IMR-90 (cell line): ENCODE measurements at regions of chr7 and their contacts with region 1.

Region 1: GRCh38 chr7:141654551-141654950 is 47.4 kb downstream of the DENND11 start:
- DNase-seq: peak; percentile 69
- ATAC-seq: peak; percentile 81
- H3K4me3 ChIP-seq: no peak overlapping the region
- H3K27ac ChIP-seq: no peak overlapping the region
- H3K4me1 ChIP-seq: no peaks in the 10 kb centered on the region
- H3K27me3 ChIP-seq: no peaks in the 10 kb centered on the region
- CTCF ChIP-seq: peak; percentile 78
- POLR2A ChIP-seq: no peak
- RAD21 ChIP-seq: peak; percentile 70

Region 2: DNA sequence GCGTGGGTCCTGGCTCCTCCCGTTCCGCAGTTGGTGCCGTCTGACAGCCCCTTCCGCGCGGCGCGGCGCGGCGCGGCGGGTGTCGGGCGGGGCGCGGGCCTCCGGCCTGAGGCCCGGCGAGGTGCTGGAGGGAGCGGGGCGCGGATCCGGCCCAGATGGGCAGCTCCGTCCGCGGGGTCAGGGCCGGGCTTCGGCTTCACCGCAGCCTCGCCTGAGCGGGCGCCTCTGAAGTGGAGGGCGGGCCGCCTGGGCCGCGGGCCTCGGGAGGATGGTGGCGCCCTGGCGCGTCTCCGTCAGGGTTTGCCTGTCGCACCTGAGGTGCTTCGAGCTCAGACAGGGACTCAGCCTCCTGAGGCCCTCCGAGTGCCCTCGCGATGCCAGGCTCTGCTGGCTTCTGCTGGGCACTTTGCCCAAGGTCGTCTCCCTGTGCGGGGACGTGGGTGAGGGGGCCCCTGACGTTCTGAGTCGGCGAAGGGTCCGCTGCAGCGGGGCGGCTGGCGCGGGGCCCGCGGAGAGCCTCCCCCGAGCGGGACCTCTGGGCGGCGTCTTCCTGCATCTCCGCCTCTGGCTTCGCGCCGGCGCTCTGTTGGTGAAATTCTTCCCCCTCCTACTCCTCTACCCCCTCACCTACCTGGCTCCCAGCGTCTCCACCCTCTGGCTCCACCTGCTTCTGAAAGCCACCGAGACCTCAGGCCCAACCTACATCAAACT is 981.3 kb before region 1 on chr7:
- CTCF ChIA-PET with region 1: no interaction called
- POLR2A ChIA-PET with region 1: no interaction called
- dilution Hi-C with region 1: no loop called
- in situ Hi-C with region 1: no loop called
- intact Hi-C with region 1: loop called (anchors 5 kb)
- DNase-seq: no peak
- ATAC-seq: peak; percentile 81
- H3K4me3 ChIP-seq: peak overlapping the region; percentile 71
- H3K27ac ChIP-seq: no peak overlapping the region; the same call in 1 of the 2 replicates
- H3K4me1 ChIP-seq: 0 out of 2 replicates have a peak, but pooled peaks cover 2% of the 10 kb centered on the region
- H3K27me3 ChIP-seq: peaks cover 6% of the 10 kb centered on the region; the same call in 1 of the 2 replicates
- CTCF ChIP-seq: no peak
- POLR2A ChIP-seq: no peak
- RAD21 ChIP-seq: no peak

Region 3: DNA sequence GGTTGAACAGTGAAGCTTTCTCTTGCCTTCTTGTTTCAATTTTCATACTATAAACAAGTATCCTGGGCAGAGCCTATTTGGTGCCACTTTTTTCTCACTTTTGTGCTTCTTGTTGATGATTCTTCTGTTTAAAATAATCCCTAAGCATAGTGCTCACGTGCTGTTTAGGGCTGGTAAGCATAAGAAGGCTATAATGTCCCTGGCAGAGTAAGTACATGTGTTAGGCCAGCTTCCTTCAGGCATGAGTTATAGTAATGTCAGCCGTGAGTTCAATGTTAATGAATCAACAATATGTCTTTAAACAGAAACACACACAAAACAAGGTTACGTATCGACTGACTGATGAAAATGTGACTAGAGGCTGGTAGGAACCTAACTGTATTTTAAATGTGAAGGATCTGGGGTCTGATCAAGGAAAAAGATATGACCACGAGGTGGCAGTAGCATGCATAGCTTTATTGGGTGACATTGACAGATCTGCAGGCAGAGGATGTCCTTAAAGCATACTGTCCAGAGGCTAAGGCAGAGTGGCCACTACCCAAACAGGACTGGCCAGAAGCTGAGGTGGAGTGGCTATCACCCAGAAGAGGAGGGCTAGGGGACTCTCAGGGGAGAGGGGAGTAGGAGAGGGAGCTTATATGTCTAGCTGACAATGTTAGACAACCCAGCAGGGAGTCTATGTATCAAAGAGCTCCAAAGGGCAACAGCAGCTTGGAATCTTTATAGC is 843.6 kb before region 1 on chr7:
- CTCF ChIA-PET with region 1: interaction called, 4 read pairs
- POLR2A ChIA-PET with region 1: no interaction called
- dilution Hi-C with region 1: no loop called
- in situ Hi-C with region 1: loop called (anchors 10 kb)
- intact Hi-C with region 1: loop called (anchors 1 kb)
- DNase-seq: peak; percentile 66
- ATAC-seq: peak; percentile 94
- H3K4me3 ChIP-seq: no peak overlapping the region
- H3K27ac ChIP-seq: no peak overlapping the region
- H3K4me1 ChIP-seq: peaks cover 2% of the 10 kb centered on the region; the same call in 1 of the 2 replicates
- H3K27me3 ChIP-seq: no peaks in the 10 kb centered on the region
- CTCF ChIP-seq: peak; percentile 72
- POLR2A ChIP-seq: no peak
- RAD21 ChIP-seq: peak; percentile 70

Region 4: GRCh38 chr7:141072548-141073172 is 581.9 kb before region 1 on chr7:
- CTCF ChIA-PET with region 1: no interaction called
- POLR2A ChIA-PET with region 1: no interaction called
- dilution Hi-C with region 1: no loop called
- in situ Hi-C with region 1: no loop called
- intact Hi-C with region 1: loop called (anchors 10 kb)
- DNase-seq: peak; percentile 73
- ATAC-seq: peak; percentile 60
- H3K4me3 ChIP-seq: peak overlapping the region; percentile 47
- H3K27ac ChIP-seq: no peak overlapping the region
- H3K4me1 ChIP-seq: peaks cover 1% of the 10 kb centered on the region; the same call in 1 of the 2 replicates
- H3K27me3 ChIP-seq: peaks cover 44% of the 10 kb centered on the region
- CTCF ChIP-seq: no peak
- POLR2A ChIP-seq: no peak
- RAD21 ChIP-seq: no peak

Region 5: DNA sequence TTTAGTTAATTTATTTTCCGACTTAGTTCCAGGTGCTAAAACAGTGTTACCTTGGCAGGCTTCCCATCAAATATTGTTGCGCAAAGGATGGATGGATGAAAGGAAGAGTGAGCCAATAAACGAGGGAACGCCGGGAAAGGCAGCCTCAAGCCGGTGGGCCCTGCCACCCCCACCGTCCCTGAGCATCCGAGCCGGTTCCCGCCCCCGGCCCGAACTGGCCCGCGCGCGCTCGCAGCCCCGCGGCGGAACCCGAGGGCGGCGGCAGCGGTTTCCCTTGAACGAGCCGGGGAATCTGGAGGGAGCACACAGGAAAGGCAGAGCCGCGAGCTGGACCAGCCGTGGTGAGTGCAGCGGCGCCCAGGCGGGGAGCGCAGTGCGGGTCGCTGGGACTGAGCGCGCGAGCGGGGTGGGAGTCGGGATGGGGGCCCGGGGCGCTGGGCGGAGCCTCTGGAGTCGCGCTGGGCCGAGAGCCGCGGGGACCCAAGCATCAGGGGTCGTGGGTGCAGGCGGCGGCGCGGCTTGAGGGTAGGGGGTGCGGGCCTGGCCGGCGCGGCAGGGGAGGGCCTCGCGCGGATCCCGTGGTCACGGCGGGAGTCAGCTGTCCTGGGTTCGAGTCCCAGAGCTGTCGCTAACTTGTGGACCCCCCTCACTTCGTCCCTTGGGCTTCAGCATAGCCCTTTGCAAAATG is 103.3 kb before region 1 on chr7 and contains the start of gene AGK:
- CTCF ChIA-PET with region 1: interaction called, 7 read pairs
- POLR2A ChIA-PET with region 1: no interaction called
- dilution Hi-C with region 1: no loop called
- in situ Hi-C with region 1: no loop called
- intact Hi-C with region 1: loop called (anchors 1 kb)
- DNase-seq: peak; percentile 75
- ATAC-seq: peak; percentile 99
- H3K4me3 ChIP-seq: peak within 1 kb of the TSS; percentile 98
- H3K27ac ChIP-seq: peak within 1 kb of the TSS; percentile 46
- H3K4me1 ChIP-seq: peaks cover 3% of the 10 kb centered on the region; the same call in 1 of the 2 replicates
- H3K27me3 ChIP-seq: no peaks in the 10 kb centered on the region
- CTCF ChIP-seq: no peak
- POLR2A ChIP-seq: peak; percentile 67
- RAD21 ChIP-seq: no peak; the same call in 1 of the 2 replicates
- total RNA-seq, gene AGK: 37.3 and 37.5 TPM in 2 replicates

Region 6: DNA sequence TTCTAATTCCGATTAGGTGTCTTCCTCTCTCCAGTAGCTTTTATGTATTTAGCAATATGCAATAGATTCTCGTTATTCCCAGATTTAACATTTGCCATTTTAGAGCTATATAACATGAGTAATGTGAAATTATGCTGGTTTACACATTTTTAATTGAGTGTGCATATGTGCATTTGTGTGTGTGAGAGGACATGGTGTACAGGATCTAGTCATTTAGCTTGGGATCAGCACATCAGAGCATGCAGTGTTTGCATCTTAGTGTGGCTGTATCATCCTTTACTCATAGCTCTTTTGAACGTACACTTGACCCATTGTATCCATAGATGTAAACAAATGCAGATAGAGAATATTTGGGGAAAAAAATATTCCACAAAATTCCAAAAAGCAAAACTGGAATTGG is 18.5 kb before region 1 on chr7:
- CTCF ChIA-PET with region 1: interaction called, 16 read pairs
- POLR2A ChIA-PET with region 1: no interaction called
- dilution Hi-C with region 1: no loop called
- in situ Hi-C with region 1: no loop called
- intact Hi-C with region 1: no loop called
- DNase-seq: peak; percentile 5
- ATAC-seq: no peak
- H3K4me3 ChIP-seq: no peak overlapping the region
- H3K27ac ChIP-seq: no peak overlapping the region
- H3K4me1 ChIP-seq: no peaks in the 10 kb centered on the region
- H3K27me3 ChIP-seq: no peaks in the 10 kb centered on the region
- CTCF ChIP-seq: no peak
- POLR2A ChIP-seq: no peak
- RAD21 ChIP-seq: no peak

Region 7: GRCh38 chr7:141737834-141738591 is 83.5 kb after region 1 on chr7 and contains the start of gene SSBP1:
- CTCF ChIA-PET with region 1: interaction called, 7 read pairs
- POLR2A ChIA-PET with region 1: no interaction called
- dilution Hi-C with region 1: no loop called
- in situ Hi-C with region 1: no loop called
- intact Hi-C with region 1: loop called (anchors 5 kb)
- DNase-seq: peak; percentile 96
- ATAC-seq: peak; percentile 97
- H3K4me3 ChIP-seq: peak within 1 kb of the TSS; percentile 65
- H3K27ac ChIP-seq: peak within 1 kb of the TSS; percentile 70
- H3K4me1 ChIP-seq: no peaks in the 10 kb centered on the region; the same call in 1 of the 2 replicates
- H3K27me3 ChIP-seq: no peaks in the 10 kb centered on the region
- CTCF ChIP-seq: peak; percentile 96
- POLR2A ChIP-seq: peak; percentile 88
- RAD21 ChIP-seq: peak; percentile 36
- total RNA-seq, gene SSBP1: 204 and 234 TPM in 2 replicates

Region 8: GRCh38 chr7:141864775-141865447 is 210.4 kb after region 1 on chr7:
- CTCF ChIA-PET with region 1: no interaction called
- POLR2A ChIA-PET with region 1: no interaction called
- dilution Hi-C with region 1: no loop called
- in situ Hi-C with region 1: no loop called
- intact Hi-C with region 1: no loop called
- DNase-seq: no peak
- ATAC-seq: no peak
- H3K4me3 ChIP-seq: no peak overlapping the region
- H3K27ac ChIP-seq: no peak overlapping the region
- H3K4me1 ChIP-seq: no peaks in the 10 kb centered on the region
- H3K27me3 ChIP-seq: no peaks in the 10 kb centered on the region
- CTCF ChIP-seq: no peak
- POLR2A ChIP-seq: no peak
- RAD21 ChIP-seq: no peak